A549 (cell line): ENCODE measurements at regions of chr2 and their contacts with region 1.

Region 1: GRCh38 chr2:69741619-69742466 is at the start of gene ANXA4:
- DNase-seq: peak; percentile 91 to 93
- ATAC-seq: peak; percentile 88 to 94
- H3K4me3 ChIP-seq: peak within 1 kb of the TSS; percentile 76
- H3K27ac ChIP-seq: peak within 1 kb of the TSS; percentile 90 to 99
- H3K4me1 ChIP-seq: peaks cover 58% of the 10 kb centered on the region
- CTCF ChIP-seq: no peak
- EP300 ChIP-seq: peak in 1 of 2 experiments; percentile 17; a peak in 1 of 5 replicates
- POLR2A ChIP-seq: peak; percentile 89
- RAD21 ChIP-seq: peak in 1 of 2 experiments; percentile 19; a peak in 3 of 5 replicates
- polyA plus RNA-seq, gene ANXA4: 341 and 360 TPM in 2 replicates

Region 2: GRCh38 chr2:69755862-69756467 is 14.1 kb after region 1 on chr2:
- CTCF ChIA-PET with region 1: interaction called, 7 read pairs
- POLR2A ChIA-PET with region 1: interaction called, 33 read pairs
- DNase-seq: peak; percentile 75 to 86
- ATAC-seq: peak; percentile 82 to 88
- H3K4me3 ChIP-seq: peak overlapping the region; percentile 18; the same call in 2 of the 3 replicates
- H3K27ac ChIP-seq: peak overlapping the region; percentile 84 to 91
- H3K4me1 ChIP-seq: peaks cover 93% of the 10 kb centered on the region
- CTCF ChIP-seq: no peak
- EP300 ChIP-seq: peak; percentile 12 to 37; a peak in 2 of 5 replicates
- POLR2A ChIP-seq: no peak
- RAD21 ChIP-seq: peak; percentile 34 to 41; a peak in 2 of 5 replicates

Region 3: DNA sequence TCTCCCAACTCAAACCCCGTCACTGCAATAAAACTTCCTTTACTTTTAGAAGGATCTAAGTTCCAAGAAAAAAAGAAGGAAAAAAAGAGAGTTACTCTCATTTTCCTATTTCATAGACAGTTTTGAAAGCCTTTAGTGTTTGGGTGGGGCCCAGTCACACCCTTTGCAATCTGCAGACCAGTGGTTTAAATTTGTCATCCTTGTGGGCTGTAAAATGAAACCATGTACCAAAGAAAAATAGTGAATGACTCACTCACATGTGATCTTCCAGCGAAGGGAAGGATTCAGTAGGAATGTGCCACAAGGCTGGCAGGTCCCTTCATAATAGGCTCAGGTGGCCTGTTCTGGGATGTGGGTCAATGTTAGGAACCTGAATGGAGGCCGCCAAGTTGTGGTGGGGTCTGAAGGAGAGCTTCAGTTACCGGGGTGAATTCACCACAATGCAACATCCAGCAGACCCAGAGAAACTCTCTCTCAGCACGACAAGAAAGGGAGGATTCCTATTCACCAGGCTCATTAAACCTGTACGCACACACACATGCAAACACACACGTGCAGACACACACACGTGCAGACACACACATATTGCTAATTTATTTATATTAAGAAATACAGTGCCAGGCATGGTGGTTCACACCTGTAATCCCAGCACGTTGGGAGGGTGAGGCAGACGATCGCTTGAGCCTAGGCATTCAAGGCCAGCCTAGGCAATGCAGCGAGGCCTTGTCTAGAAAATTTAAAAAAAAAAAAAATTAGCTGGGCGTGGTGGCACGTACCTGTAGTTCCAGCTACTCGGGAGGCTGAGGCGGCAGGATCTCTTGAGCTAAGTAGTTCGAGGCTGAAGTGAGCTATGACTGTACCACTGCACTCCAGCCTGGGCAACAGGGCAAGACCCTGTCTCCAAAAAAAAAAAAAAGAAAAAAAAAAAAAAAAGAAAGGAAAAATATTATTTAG is 28.6 kb after region 1 on chr2:
- CTCF ChIA-PET with region 1: interaction called, 5 read pairs
- POLR2A ChIA-PET with region 1: interaction called, 10 read pairs
- DNase-seq: peak; percentile 63 to 77
- ATAC-seq: peak; percentile 71 to 74
- H3K4me3 ChIP-seq: no peak overlapping the region
- H3K27ac ChIP-seq: peak overlapping the region; percentile 90 to 93
- H3K4me1 ChIP-seq: peaks cover 100% of the 10 kb centered on the region
- CTCF ChIP-seq: no peak
- EP300 ChIP-seq: peak in 1 of 2 experiments; percentile 31; a peak in 1 of 5 replicates
- POLR2A ChIP-seq: no peak
- RAD21 ChIP-seq: peak in 1 of 2 experiments; percentile 22; a peak in 1 of 5 replicates

Region 4: DNA sequence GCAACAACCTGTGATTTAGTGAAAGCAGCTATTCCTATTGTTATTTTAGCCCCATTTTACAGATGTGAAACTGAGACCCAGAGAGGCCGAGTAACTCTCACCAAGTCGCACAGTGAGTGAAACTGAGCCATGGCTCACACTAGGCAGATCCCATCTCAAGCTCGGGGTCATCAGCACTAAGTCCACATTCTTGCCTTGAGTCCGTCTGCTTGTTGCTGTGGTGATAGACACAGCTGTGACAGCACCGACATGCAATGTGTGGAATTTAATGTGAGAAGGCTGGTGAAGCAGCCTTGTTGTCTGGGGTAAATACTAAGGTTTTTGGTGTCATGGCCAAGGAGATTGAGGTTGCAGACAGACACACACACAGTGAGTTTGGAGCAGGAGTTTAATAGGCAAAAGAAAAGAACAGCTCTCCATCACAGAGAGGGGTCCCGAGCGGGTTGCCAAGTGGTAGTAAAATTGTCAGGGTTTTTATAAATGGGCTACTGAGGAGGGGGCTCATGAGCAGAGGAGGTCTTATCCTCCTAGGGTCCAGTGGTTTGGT is 47.4 kb after region 1 on chr2:
- CTCF ChIA-PET with region 1: interaction called, 4 read pairs
- POLR2A ChIA-PET with region 1: interaction called, 14 read pairs
- DNase-seq: peak; percentile 64 to 91
- ATAC-seq: peak; percentile 95 to 96
- H3K4me3 ChIP-seq: no peak overlapping the region
- H3K27ac ChIP-seq: peak overlapping the region; percentile 68 to 79
- H3K4me1 ChIP-seq: peaks cover 64% of the 10 kb centered on the region
- CTCF ChIP-seq: no peak
- EP300 ChIP-seq: no peak
- POLR2A ChIP-seq: no peak
- RAD21 ChIP-seq: no peak; a peak in 1 of 5 replicates

Region 5: DNA sequence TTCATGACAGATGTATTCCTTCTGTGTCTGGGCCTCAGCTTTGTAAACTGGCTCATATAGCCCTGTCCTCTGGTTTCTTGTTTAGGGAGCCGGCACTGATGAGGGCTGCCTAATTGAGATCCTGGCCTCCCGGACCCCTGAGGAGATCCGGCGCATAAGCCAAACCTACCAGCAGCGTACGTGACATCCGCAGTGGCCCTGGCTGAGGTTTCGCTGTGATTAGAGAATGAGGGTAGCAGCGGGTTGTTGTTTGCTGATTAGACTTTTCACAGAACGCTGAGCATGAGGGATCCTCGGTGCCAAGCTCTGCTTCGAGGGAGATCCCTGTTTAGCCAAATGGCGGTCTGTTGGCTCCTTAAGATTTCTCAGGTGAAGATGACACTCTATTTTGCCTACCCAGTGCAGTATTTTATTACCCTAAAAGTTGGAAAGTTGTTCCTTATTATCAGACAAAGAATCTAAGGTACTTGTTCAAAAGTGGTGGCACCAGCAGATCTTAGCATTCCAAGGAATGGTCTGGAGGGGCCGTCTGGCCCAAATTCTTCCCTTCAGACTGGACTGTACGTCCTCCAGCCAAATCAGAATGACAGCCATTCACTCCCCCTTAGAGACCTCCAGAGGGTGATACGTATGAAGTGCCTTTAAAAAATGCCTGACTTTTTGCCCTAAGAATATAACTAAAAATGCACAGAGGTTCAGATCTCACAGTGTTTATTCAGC is 66.1 kb after region 1 on chr2:
- CTCF ChIA-PET with region 1: interaction called, 10 read pairs
- POLR2A ChIA-PET with region 1: interaction called, 10 read pairs
- DNase-seq: no peak
- ATAC-seq: no peak
- H3K4me3 ChIP-seq: no peak overlapping the region
- H3K27ac ChIP-seq: no peak overlapping the region
- H3K4me1 ChIP-seq: no peaks in the 10 kb centered on the region
- CTCF ChIP-seq: no peak
- EP300 ChIP-seq: no peak
- POLR2A ChIP-seq: no peak
- RAD21 ChIP-seq: no peak

Region 6: GRCh38 chr2:70078384-70078783 is 336.5 kb after region 1 on chr2:
- CTCF ChIA-PET with region 1: no interaction called
- POLR2A ChIA-PET with region 1: no interaction called
- DNase-seq: no peak
- ATAC-seq: no peak
- H3K4me3 ChIP-seq: no peak overlapping the region
- H3K27ac ChIP-seq: no peak overlapping the region
- H3K4me1 ChIP-seq: peaks cover 4% of the 10 kb centered on the region
- CTCF ChIP-seq: no peak
- EP300 ChIP-seq: no peak
- POLR2A ChIP-seq: no peak
- RAD21 ChIP-seq: no peak

Region 7: DNA sequence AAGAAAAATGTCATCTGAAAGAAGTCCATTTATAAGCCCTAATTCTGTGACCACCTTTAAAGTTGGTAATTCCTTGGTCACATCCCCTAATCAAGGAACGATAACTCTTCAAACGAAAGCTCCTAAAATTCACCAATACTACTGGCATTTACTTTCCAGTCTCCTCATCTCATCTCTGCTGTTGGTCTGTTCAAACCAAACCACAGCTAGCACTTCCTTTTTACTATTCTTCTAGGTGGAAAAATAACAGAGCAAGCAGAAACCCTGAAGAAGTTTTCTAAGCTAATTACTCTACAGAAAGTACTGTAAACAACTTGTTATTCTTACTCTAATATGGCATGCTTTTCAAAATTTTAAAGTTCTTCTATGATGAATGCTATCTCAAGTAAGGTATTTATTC is 484.9 kb after region 1 on chr2:
- CTCF ChIA-PET with region 1: no interaction called
- POLR2A ChIA-PET with region 1: no interaction called
- DNase-seq: no peak
- ATAC-seq: no peak
- H3K4me3 ChIP-seq: no peak overlapping the region
- H3K27ac ChIP-seq: no peak overlapping the region
- H3K4me1 ChIP-seq: no peaks in the 10 kb centered on the region
- CTCF ChIP-seq: no peak
- EP300 ChIP-seq: no peak
- POLR2A ChIP-seq: no peak
- RAD21 ChIP-seq: no peak